HepG2 (cell line): ENCODE measurements at regions of chr18 and their contacts with region 1.

Region 1: GRCh38 chr18:58416704-58417683 is 211.9 kb downstream of the ALPK2 start:
- DNase-seq: peak; percentile 70
- ATAC-seq: peak; percentile 27
- H3K4me3 ChIP-seq: peak overlapping the region in 1 of 3 experiments; percentile 42; a peak in 2 of 6 replicates
- H3K27ac ChIP-seq: peak overlapping the region; percentile 98
- H3K4me1 ChIP-seq: peaks cover 68% of the 10 kb centered on the region
- H3K27me3 ChIP-seq: no peaks in the 10 kb centered on the region
- CTCF ChIP-seq: no peak
- EP300 ChIP-seq: no peak
- POLR2A ChIP-seq: peak in 1 of 2 experiments; percentile 50; a peak in 2 of 4 replicates
- RAD21 ChIP-seq: no peak

Region 2: GRCh38 chr18:57621246-57621604 is 795.8 kb before region 1 on chr18:
- CTCF ChIA-PET with region 1: no interaction called
- POLR2A ChIA-PET with region 1: no interaction called
- in situ Hi-C with region 1: no loop called
- intact Hi-C with region 1: loop called (anchors 10 kb)
- DNase-seq: no peak
- ATAC-seq: peak; percentile 64
- H3K4me3 ChIP-seq: peak overlapping the region; percentile 87 to 98 (median 94)
- H3K27ac ChIP-seq: peak overlapping the region; percentile 86
- H3K4me1 ChIP-seq: peaks cover 26% of the 10 kb centered on the region
- H3K27me3 ChIP-seq: no peaks in the 10 kb centered on the region; a peak in 1 of 5 replicates
- CTCF ChIP-seq: no peak
- EP300 ChIP-seq: no peak
- POLR2A ChIP-seq: no peak
- RAD21 ChIP-seq: no peak

Region 3: GRCh38 chr18:58015065-58015780 is 401.8 kb before region 1 on chr18:
- CTCF ChIA-PET with region 1: no interaction called
- POLR2A ChIA-PET with region 1: interaction called, 6 read pairs
- in situ Hi-C with region 1: loop called (anchors 10 kb)
- intact Hi-C with region 1: loop called (anchors 1 kb)
- DNase-seq: no peak
- ATAC-seq: no peak
- H3K4me3 ChIP-seq: no peak overlapping the region
- H3K27ac ChIP-seq: peak overlapping the region; percentile 70
- H3K4me1 ChIP-seq: peaks cover 94% of the 10 kb centered on the region
- H3K27me3 ChIP-seq: no peaks in the 10 kb centered on the region
- CTCF ChIP-seq: no peak
- EP300 ChIP-seq: no peak
- POLR2A ChIP-seq: no peak
- RAD21 ChIP-seq: no peak

Region 4: DNA sequence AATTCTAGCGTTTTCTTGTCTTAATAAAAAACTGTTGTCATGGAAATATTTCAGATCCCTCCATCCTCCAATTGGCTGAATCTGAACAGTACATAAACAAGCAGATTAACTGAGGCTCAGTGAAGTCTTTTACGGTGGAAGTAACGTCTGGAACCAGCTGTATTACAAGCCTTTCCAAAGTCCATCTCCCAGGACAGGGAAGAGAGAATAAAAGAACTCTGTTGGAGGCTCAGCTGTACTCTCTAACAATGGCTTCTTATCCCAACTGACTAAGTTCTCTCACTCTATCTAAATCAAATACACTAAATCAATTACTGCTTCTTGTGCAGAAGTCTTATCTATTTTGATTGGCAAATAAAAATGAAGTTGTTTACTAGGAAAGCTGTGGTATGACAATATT is 392.9 kb before region 1 on chr18:
- CTCF ChIA-PET with region 1: no interaction called
- POLR2A ChIA-PET with region 1: no interaction called
- in situ Hi-C with region 1: loop called (anchors 10 kb)
- intact Hi-C with region 1: no loop called
- DNase-seq: peak; percentile 94
- ATAC-seq: peak; percentile 93
- H3K4me3 ChIP-seq: no peak overlapping the region
- H3K27ac ChIP-seq: peak overlapping the region; percentile 61
- H3K4me1 ChIP-seq: peaks cover 96% of the 10 kb centered on the region
- H3K27me3 ChIP-seq: no peaks in the 10 kb centered on the region
- CTCF ChIP-seq: no peak
- EP300 ChIP-seq: peak in 1 of 2 experiments; percentile 71; a peak in 1 of 4 replicates
- POLR2A ChIP-seq: no peak
- RAD21 ChIP-seq: no peak

Region 5: GRCh38 chr18:58402247-58402646 is 14.7 kb before region 1 on chr18:
- CTCF ChIA-PET with region 1: no interaction called
- POLR2A ChIA-PET with region 1: interaction called, 181 read pairs
- in situ Hi-C with region 1: no loop called
- intact Hi-C with region 1: loop called (anchors 1 kb)
- DNase-seq: peak; percentile 58
- ATAC-seq: no peak
- H3K4me3 ChIP-seq: no peak overlapping the region
- H3K27ac ChIP-seq: peak overlapping the region; percentile 98
- H3K4me1 ChIP-seq: peaks cover 100% of the 10 kb centered on the region
- H3K27me3 ChIP-seq: no peaks in the 10 kb centered on the region
- CTCF ChIP-seq: no peak
- EP300 ChIP-seq: no peak
- POLR2A ChIP-seq: no peak
- RAD21 ChIP-seq: no peak

Region 6: DNA sequence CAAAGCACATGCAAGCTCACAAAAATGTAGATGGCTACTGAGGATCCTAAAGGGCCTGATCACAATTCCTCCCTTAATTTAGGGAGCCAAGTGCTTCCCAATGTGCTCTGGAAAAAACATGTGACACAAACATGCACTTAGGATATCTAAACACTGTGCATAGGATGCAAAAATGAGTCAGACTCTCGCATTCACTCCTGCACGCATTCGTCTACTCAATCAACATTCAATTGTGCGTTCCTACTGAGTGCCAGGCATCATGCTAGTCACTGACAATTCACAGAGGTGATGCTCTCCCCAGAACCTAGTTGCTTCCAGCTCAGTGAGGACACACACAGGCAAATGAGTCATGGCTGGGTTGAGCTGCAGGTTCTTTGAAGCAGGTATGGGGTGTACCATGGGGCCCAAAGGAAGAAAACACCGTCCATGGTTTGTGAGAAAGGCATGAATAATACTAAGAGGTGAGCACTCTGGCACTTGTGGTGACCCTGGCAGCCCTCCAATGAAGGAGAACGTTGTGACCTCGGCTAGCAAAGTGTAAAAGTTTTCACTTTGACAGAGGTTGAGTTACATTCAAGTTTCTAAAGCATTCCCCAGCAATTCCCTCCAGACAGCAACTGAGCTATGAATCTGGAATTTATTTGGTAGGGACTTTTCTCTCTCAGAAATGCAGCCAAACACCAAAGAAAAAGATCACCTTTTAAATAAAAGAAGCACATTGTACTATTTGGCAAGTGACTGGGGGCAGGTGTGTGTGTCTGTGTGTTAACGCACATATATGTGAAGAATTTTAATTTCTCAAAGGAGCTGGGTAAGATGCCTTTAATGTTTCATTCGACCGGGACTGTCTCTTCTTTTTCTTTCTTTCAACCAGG is 38.6 kb after region 1 on chr18:
- CTCF ChIA-PET with region 1: no interaction called
- POLR2A ChIA-PET with region 1: interaction called, 18 read pairs
- in situ Hi-C with region 1: no loop called
- intact Hi-C with region 1: no loop called
- DNase-seq: no peak
- ATAC-seq: peak; percentile 56; the same call in 2 of the 3 replicates
- H3K4me3 ChIP-seq: no peak overlapping the region
- H3K27ac ChIP-seq: no peak overlapping the region
- H3K4me1 ChIP-seq: peaks cover 52% of the 10 kb centered on the region
- H3K27me3 ChIP-seq: no peaks in the 10 kb centered on the region
- CTCF ChIP-seq: no peak
- EP300 ChIP-seq: no peak
- POLR2A ChIP-seq: no peak
- RAD21 ChIP-seq: no peak

Region 7: DNA sequence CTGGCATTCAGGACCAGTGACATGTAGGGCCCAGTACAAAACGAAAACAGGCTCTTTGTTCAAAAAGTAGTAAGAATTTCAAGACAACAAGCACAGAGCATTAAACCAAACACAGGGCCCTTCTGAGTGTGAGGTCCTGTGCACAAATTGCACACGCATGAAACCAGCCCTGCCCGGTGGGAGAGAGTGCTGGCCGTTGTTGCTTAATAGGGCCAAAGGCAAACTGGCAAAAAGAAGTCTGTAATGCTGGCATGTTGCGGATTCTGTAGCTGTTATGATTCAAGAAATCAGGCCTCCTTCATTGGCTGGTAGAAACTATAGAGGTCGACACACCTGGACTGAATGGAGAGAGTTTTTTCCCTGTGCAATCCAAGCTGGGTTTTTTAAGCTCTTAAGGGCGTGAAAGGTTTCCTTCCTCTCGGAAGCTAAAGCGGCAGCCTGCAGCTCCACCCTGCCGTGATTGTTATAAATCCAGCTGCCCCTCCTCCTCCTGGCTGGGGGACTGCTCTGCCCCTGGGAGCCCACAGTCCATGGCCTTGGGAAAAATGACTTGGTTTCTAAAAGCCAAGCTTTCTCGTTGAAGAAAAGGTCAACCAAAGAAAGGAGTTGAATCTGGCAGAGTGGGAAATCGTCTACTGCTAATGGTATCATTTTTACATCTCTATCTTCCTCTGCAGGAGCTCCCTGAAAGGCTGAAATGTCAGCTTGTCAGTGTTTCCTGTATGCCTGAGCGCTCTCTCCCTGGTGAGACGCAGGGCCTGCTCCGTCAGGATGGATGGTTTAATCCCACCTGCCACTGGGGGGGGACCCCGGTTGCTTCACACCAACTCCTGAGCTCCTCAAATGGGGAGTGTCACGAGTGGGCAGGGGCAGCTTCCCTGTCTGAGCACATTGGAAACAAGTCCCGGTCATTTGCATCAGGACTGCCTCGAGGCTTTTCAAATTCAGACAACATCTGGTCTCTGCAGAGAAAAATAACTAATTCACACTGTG is 68.3 kb after region 1 on chr18:
- CTCF ChIA-PET with region 1: no interaction called
- POLR2A ChIA-PET with region 1: interaction called, 19 read pairs
- in situ Hi-C with region 1: no loop called
- intact Hi-C with region 1: no loop called
- DNase-seq: no peak
- ATAC-seq: peak; percentile 40
- H3K4me3 ChIP-seq: no peak overlapping the region
- H3K27ac ChIP-seq: peak overlapping the region; percentile 55
- H3K4me1 ChIP-seq: peaks cover 81% of the 10 kb centered on the region
- H3K27me3 ChIP-seq: no peaks in the 10 kb centered on the region
- CTCF ChIP-seq: no peak
- EP300 ChIP-seq: no peak
- POLR2A ChIP-seq: no peak
- RAD21 ChIP-seq: no peak